Psoas muscle (tissue), 8 donors: ENCODE measurements at regions of chr20 and their contacts with region 1.

Region 1: GRCh38 chr20:50379049-50379990 is 130.9 kb upstream of the PTPN1 start:
- DNase-seq: peak; percentile 95 to 98
- ATAC-seq: peak; percentile 81 to 86 (median 82)
- H3K4me3 ChIP-seq: peak overlapping the region; percentile 59
- H3K27ac ChIP-seq: peak overlapping the region; percentile 94
- H3K4me1 ChIP-seq: peaks cover 37% of the 10 kb centered on the region
- H3K27me3 ChIP-seq: no peaks in the 10 kb centered on the region
- CTCF ChIP-seq: no peak

Region 2: DNA sequence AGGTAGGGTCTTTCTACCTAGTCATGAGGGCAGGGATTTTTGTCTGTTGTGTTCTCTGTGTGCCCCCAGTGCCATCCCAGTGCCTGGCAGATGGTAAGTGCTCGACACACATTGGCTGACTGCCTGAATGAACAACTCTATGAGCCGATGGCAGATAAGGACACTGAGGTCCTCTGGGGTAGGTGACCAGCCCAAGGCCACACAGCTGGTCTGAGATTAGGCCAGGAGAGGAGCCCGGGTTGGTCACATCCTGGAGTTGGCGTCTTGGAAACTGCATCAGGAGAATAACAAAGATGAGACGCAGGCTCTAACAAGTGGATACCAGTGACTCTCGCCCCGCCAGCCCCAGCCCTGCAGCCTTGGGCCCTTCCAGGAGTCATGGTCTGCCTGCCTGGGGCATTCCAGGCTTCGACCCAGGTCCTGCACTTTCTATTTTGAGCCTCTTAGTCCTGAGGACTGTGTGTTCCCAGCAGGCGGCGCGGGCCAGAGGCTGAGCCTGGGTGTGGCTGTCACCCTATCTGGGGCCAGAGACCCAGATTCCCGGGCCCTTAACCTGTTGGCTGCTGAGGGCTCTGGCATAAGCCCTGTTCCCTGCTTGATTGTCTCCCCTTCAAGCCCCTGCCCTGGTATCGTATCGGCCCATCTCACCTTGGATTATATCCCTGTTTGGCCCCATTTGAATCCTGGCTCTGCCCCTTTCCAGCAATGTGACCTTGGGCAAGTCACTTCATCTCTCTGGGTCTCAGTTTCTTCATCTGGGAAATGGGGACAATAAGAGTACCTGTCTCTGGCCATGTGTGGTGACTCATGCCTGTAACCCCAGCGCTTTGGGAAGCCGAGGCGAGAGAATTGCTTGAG is 100.4 kb before region 1 on chr20:
- intact Hi-C with region 1: loop called in 1 of 2 experiments (anchors 5 kb)
- DNase-seq: peak; percentile 90 to 96
- ATAC-seq: peak; percentile 89 to 92 (median 91)
- H3K4me3 ChIP-seq: no peak overlapping the region
- H3K27ac ChIP-seq: peak overlapping the region; percentile 82
- H3K4me1 ChIP-seq: peaks cover 44% of the 10 kb centered on the region
- H3K27me3 ChIP-seq: no peaks in the 10 kb centered on the region
- CTCF ChIP-seq: peak; percentile 52

Region 3: DNA sequence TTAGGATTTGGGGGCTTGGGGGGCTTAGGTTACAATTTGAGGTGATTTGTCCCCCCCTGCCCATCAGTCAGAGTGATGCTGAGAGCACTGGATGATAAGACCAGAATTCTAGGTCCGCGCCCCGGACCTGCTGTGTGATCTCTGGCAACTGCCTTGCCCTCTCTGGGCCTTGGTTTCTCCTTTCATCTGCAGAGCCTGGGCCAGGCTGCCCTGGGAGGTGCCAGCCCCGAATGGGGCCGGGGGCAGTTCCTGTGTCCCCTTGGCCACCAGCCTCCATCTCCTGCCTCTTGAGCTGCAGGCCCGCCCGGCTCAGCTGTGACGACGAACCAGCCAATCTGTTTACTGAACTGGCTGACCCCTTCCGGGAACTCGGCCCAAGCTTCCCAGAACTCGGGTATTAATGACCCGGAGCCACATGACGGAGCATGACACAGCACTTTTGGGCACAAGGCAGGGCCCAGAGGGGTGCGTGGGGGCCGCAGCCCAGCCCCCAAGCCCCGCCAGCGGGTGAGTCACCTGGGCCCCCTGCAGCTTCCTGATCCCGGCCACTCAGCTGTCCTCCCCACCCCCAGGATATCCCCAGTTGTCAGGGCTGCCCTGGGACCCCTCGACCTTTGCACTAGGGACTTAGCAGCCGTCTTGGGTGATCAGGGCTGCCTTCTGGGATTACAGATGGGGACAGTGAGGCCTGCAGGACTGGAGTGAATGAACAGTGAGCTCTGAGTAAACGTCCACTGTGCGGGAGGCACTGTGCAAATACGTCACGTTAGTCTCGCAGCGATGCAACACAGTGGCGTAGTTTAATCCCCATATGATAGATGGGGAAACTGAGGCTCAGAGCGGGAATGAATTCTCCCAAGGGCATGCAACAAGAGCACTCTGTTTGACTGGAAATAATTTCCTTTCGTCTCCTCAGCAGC is 86.7 kb before region 1 on chr20:
- intact Hi-C with region 1: loop called in 1 of 2 experiments (anchors 5 kb)
- DNase-seq: peak; percentile 97
- ATAC-seq: peak; percentile 84 to 88 (median 86)
- H3K4me3 ChIP-seq: no peak overlapping the region
- H3K27ac ChIP-seq: peak overlapping the region; percentile 89
- H3K4me1 ChIP-seq: peaks cover 16% of the 10 kb centered on the region
- H3K27me3 ChIP-seq: no peaks in the 10 kb centered on the region
- CTCF ChIP-seq: no peak

Region 4: GRCh38 chr20:50308513-50309279 is 70.6 kb before region 1 on chr20:
- intact Hi-C with region 1: loop called in 1 of 2 experiments (anchors 5 kb)
- DNase-seq: peak; percentile 93 to 95
- ATAC-seq: peak; percentile 59 to 73 (median 66)
- H3K4me3 ChIP-seq: peak overlapping the region; percentile 2
- H3K27ac ChIP-seq: peak overlapping the region; percentile 84
- H3K4me1 ChIP-seq: peaks cover 49% of the 10 kb centered on the region
- H3K27me3 ChIP-seq: no peaks in the 10 kb centered on the region
- CTCF ChIP-seq: no peak